Naive thymus-derived CD8-positive, alpha-beta T cell (primary cell): ENCODE measurements at regions of chr19 and their contacts with region 1.

Region 1: DNA sequence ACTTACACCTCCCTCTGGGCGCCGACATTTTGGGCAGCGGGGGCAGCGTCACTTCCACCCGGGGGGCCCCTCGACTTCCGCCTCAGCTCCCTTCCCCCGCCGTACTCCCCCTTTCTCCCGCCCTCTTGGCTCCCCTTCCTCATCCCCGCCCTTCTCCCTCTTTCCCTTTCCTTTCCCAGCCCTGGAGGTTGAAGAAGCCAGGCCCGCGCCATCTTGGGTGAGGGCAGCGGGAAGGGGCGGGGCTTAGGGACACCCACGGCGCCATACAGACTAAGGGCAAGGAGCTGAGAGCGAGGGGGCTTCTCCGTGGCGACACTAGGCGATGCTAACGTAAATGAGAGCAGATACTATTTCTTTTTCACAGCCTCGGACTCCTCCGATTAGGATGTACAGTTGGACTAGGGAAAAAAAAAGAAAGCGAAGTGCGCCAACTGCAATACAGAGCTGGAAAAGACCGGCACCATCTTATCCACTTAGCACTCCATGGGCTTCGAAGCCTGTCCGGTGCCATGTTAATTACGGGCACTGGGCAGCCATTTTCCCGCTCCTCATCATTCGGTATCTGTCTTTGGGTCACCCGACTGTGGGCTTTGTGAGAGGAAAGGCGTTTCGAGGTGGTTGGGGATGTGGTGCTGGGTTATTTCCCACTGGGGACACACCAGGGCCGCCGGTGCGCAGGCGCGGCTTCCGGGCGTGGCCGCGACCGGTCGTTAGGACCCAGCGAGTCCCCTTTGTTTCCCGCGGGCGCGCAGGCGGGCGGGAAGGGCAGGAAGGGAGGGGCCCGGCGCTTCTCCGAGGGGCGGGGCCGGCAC is at the start of gene FIZ1:
- DNase-seq: peak; percentile 89 to 99 (median 96)
- ATAC-seq: peak; percentile 76 to 78
- H3K4me3 Mint-ChIP-seq: peak within 1 kb of the TSS; percentile 89 to 100 (median 99)
- H3K27ac Mint-ChIP-seq: peak within 1 kb of the TSS; percentile 96 to 100 (median 99)
- H3K4me1 Mint-ChIP-seq: peaks cover 16 to 39% (median 28%) of the 10 kb centered on the region in 4 donors
- H3K27me3 Mint-ChIP-seq: no peaks in the 10 kb centered on the region
- polyA plus RNA-seq, gene FIZ1: 2.8 to 5.4 (median 3.4) TPM

Region 2: GRCh38 chr19:55528030-55528803 is 71.5 kb before region 1 on chr19:
- POLR2A ChIA-PET with region 1: no interaction called
- DNase-seq: no peak
- ATAC-seq: no peak
- H3K4me3 Mint-ChIP-seq: no peak overlapping the region
- H3K27ac Mint-ChIP-seq: no peak overlapping the region
- H3K4me1 Mint-ChIP-seq: no peaks in the 10 kb centered on the region
- H3K27me3 Mint-ChIP-seq: peaks cover 0 to 13% (median 5%) of the 10 kb centered on the region in 5 donors

Region 3: GRCh38 chr19:55580628-55581144 is 19.0 kb before region 1 on chr19 and contains the start of gene ZNF579:
- POLR2A ChIA-PET with region 1: interaction called, 25 read pairs
- DNase-seq: peak; percentile 45 to 85 (median 69)
- ATAC-seq: peak; percentile 65 to 74
- H3K4me3 Mint-ChIP-seq: peak within 1 kb of the TSS; percentile 82 to 95 (median 87)
- H3K27ac Mint-ChIP-seq: peak within 1 kb of the TSS; percentile 88 to 96 (median 92)
- H3K4me1 Mint-ChIP-seq: peaks cover 18 to 31% (median 30%) of the 10 kb centered on the region in 4 donors
- H3K27me3 Mint-ChIP-seq: no peaks in the 10 kb centered on the region
- polyA plus RNA-seq, gene ZNF579: 0.16 to 0.39 (median 0.20) TPM

Region 4: GRCh38 chr19:55586976-55587668 is 12.6 kb before region 1 on chr19:
- POLR2A ChIA-PET with region 1: interaction called, 25 read pairs
- DNase-seq: peak; percentile 84 to 96 (median 92)
- ATAC-seq: peak; percentile 96 to 99
- H3K4me3 Mint-ChIP-seq: peak overlapping the region; percentile 68 to 92 (median 88)
- H3K27ac Mint-ChIP-seq: peak overlapping the region; percentile 37 to 94 (median 88)
- H3K4me1 Mint-ChIP-seq: peaks cover 13 to 34% (median 29%) of the 10 kb centered on the region in 4 donors
- H3K27me3 Mint-ChIP-seq: no peaks in the 10 kb centered on the region

Region 5: DNA sequence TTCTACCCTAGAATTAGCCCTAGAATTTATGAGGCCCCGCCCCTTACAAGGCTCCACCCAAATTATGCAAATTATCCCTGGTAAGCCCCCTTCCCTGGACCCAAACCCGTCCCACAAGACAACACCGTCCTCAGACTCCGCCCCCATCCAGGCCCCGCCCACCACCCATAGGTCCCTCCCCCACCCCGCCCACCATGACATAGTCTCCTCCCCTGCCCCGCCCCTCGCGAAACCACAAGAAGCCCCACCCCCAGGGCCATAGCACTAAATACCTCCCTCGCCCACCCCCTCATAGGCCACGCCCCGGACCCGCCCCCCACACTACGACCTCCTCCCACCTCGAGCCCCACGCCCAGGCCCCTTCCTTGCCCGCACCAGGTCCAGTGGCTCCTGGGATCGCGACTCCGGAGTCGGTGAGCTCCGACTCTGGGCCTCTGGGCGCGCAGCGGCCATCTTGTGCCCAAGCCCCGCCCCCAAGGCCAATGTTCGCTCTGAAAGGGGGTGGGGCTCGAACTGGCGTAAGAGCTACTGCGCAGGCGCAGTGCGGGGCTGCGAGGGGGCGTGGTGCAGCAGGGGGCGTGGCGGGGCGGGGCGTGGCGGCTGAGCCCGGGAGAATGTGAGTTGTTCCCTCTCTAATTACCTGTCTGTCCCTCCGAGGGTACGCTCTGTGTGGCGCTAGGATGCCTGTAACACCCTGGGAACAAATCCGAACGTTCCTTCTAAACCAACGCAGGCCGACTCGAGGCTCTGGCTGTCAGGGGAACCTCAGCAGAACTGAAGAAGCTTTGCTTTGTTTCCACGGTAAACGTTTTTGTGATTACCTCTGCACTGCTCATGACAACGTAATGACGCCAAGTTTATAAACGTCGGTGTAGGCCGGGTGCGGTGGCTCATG is 24.7 kb after region 1 on chr19 and contains the start of gene ZNF784:
- POLR2A ChIA-PET with region 1: interaction called, 55 read pairs
- DNase-seq: peak; percentile 87 to 97 (median 95)
- ATAC-seq: peak; percentile 60
- H3K4me3 Mint-ChIP-seq: peak within 1 kb of the TSS; percentile 85 to 97 (median 89)
- H3K27ac Mint-ChIP-seq: peak within 1 kb of the TSS; percentile 81 to 99 (median 98)
- H3K4me1 Mint-ChIP-seq: peaks cover 26 to 65% (median 56%) of the 10 kb centered on the region in 4 donors
- H3K27me3 Mint-ChIP-seq: no peaks in the 10 kb centered on the region
- polyA plus RNA-seq, gene ZNF784: 0.64 to 1.4 (median 1.1) TPM

Region 6: GRCh38 chr19:55643348-55644176 is 43.9 kb after region 1 on chr19 and contains the start of gene ZNF581:
- POLR2A ChIA-PET with region 1: interaction called, 21 read pairs
- DNase-seq: peak; percentile 67 to 86 (median 76)
- ATAC-seq: peak; percentile 45 to 51
- H3K4me3 Mint-ChIP-seq: peak within 1 kb of the TSS; percentile 91 to 99 (median 94)
- H3K27ac Mint-ChIP-seq: peak within 1 kb of the TSS; percentile 94 to 99 (median 98)
- H3K4me1 Mint-ChIP-seq: peaks cover 30 to 64% (median 60%) of the 10 kb centered on the region in 4 donors
- H3K27me3 Mint-ChIP-seq: no peaks in the 10 kb centered on the region
- polyA plus RNA-seq, gene ZNF581: 21.2 to 35.9 (median 34.9) TPM

Region 7: GRCh38 chr19:55653758-55654539 is 54.3 kb after region 1 on chr19:
- POLR2A ChIA-PET with region 1: interaction called, 37 read pairs
- DNase-seq: peak; percentile 99 to 100 (median 100)
- ATAC-seq: peak; percentile 80 to 81
- H3K4me3 Mint-ChIP-seq: peak overlapping the region; percentile 88 to 99 (median 97)
- H3K27ac Mint-ChIP-seq: peak overlapping the region; percentile 97 to 100 (median 99)
- H3K4me1 Mint-ChIP-seq: peaks cover 25 to 56% (median 54%) of the 10 kb centered on the region in 4 donors
- H3K27me3 Mint-ChIP-seq: no peaks in the 10 kb centered on the region